ENCODE measurements at regions of chr10 and their contacts with region 1.

Region 1: GRCh38 chr10:124741281-124741921 is 2.8 kb downstream of the FAM53B start:
- DNase-seq: peak; percentile 88
- ATAC-seq: peak; percentile 67
- H3K4me3 Mint-ChIP-seq: peak overlapping the region; percentile 65
- H3K27ac Mint-ChIP-seq: peak overlapping the region; percentile 84
- H3K4me1 Mint-ChIP-seq: peaks cover 74% of the 10 kb centered on the region
- H3K27me3 Mint-ChIP-seq: peaks cover 7% of the 10 kb centered on the region

Region 2: DNA sequence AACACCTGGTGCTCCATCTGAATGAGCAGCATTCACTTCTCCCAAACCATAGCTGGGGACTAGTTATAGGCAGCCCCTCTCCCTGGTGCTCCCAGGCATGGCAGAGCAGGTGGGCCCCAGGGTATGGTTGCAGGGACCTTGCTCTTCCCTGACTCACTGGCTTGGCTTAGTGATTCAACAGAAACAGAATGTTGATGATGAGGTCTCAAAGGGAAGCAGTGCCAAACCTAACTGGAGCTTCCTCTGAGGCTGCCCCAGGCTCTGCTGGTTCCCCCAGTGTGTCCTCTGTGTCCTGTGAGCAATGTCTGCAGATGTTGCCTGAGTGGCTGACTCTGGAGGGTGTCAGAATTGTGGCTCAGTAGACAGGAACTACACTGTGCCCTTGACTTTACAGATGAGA is 1071.5 kb before region 1 on chr10:
- CTCF ChIA-PET with region 1: no interaction called
- POLR2A ChIA-PET with region 1: no interaction called
- intact Hi-C with region 1: no loop called
- DNase-seq: no peak
- ATAC-seq: no peak
- H3K4me3 Mint-ChIP-seq: no peak overlapping the region
- H3K27ac Mint-ChIP-seq: no peak overlapping the region
- H3K4me1 Mint-ChIP-seq: no peaks in the 10 kb centered on the region
- H3K27me3 Mint-ChIP-seq: peaks cover 15% of the 10 kb centered on the region

Region 3: DNA sequence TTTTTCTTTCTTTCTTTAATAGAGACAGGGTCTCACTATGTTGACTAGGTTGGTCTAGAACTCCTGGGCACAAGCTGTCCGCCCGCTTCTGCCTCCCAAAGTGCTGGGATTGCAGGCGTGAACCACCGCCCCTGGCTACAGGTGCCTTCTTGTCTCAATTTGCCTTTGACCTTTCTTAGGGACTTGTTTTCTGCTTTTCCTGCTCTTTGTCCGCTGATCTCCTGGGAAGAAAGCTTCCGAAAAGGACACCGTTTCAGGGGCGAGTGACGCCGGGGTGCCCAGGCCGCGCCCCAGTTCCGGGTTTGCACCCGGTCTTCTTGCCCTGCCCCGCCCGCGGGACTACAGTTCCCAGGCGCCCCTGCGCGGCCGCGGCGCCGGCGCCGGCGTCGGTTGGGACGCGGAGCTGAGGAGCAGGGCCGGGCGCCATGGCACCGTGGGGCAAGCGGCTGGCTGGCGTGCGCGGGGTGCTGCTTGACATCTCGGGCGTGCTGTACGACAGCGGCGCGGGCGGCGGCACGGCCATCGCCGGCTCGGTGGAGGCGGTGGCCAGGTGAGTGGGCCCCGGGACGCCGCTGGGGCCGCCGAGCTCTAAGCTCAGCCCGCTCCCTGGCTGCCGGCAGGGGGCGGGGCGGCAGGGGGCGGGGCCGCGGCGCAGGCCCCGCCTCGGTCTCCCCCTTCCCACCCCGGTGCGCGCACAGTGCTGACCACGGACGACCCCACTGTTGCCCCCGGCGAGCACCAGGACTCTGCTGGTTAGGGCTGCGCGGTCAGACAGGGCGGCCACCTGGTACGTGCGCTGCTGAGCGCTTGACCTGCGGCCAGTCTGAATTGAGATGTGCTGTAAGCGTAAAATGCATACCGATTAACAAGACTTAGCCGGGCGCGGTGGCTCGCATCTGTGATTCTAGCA is 279.7 kb before region 1 on chr10 and contains the start of gene LHPP:
- CTCF ChIA-PET with region 1: no interaction called
- POLR2A ChIA-PET with region 1: no interaction called
- intact Hi-C with region 1: loop called in 1 of 2 experiments (anchors 5 kb)
- DNase-seq: peak; percentile 92
- ATAC-seq: peak; percentile 97
- H3K4me3 Mint-ChIP-seq: peak within 1 kb of the TSS; percentile 71
- H3K27ac Mint-ChIP-seq: peak within 1 kb of the TSS; percentile 96
- H3K4me1 Mint-ChIP-seq: peaks cover 25% of the 10 kb centered on the region
- H3K27me3 Mint-ChIP-seq: peaks cover 2% of the 10 kb centered on the region
- total RNA-seq, gene LHPP: 11.5 to 14.0 TPM

Region 4: DNA sequence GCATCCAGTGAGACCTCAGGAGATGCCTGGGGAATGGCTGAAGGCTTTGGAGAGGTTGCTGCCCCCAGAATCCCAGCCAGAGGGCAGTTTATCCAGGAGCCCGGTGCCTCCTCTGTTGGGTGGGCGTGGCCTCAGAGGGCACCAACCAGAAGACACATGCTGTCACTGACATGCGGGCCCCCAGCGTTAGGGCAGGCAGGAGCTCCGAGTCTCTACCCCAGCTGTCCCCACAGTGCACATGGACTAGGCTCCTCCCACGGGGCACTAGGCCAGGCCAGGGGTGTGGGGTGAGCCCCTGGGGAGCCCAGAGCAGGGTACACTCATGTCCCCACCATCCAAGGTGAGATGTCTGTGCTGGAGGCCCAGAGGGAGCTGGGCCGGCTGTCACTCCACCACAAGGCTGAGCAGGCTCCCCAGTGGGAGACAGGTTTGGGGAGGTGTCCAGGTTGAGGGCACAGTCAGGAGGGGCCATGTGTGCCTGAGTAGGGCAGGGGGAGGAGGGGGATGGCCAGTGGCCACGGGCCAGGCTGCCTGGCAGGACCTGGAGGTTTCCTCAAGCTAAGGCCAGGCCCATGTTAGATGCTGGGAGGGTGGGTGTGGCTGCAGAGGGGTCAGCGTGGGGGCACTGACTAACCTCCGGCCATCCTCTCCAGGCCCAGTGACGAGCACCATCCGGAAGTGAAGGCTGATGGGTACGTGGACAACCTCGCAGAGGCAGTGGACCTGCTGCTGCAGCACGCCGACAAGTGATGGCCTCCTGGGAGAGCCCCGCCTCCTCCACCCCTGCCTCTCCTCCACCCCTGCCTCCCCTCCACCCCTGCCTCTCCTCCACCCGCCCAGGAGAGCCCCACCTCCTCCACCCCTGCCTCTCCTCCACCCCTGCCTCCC is 128.5 kb before region 1 on chr10:
- CTCF ChIA-PET with region 1: interaction called, 6 read pairs
- POLR2A ChIA-PET with region 1: no interaction called
- intact Hi-C with region 1: loop called (anchors 1 to 5 kb)
- DNase-seq: peak; percentile 43
- ATAC-seq: peak; percentile 30
- H3K4me3 Mint-ChIP-seq: no peak overlapping the region
- H3K27ac Mint-ChIP-seq: no peak overlapping the region
- H3K4me1 Mint-ChIP-seq: peaks cover 36% of the 10 kb centered on the region
- H3K27me3 Mint-ChIP-seq: no peaks in the 10 kb centered on the region

Region 5: GRCh38 chr10:124660404-124661125 is 80.8 kb before region 1 on chr10:
- CTCF ChIA-PET with region 1: interaction called, 12 read pairs
- POLR2A ChIA-PET with region 1: no interaction called
- intact Hi-C with region 1: no loop called
- DNase-seq: no peak
- ATAC-seq: no peak
- H3K4me3 Mint-ChIP-seq: no peak overlapping the region
- H3K27ac Mint-ChIP-seq: no peak overlapping the region
- H3K4me1 Mint-ChIP-seq: peaks cover 48% of the 10 kb centered on the region
- H3K27me3 Mint-ChIP-seq: no peaks in the 10 kb centered on the region

Region 6: GRCh38 chr10:124697830-124698544 is 43.4 kb before region 1 on chr10:
- CTCF ChIA-PET with region 1: interaction called, 13 read pairs
- POLR2A ChIA-PET with region 1: interaction called, 6 read pairs
- intact Hi-C with region 1: no loop called
- DNase-seq: peak; percentile 71
- ATAC-seq: peak; percentile 47
- H3K4me3 Mint-ChIP-seq: peak overlapping the region; percentile 56
- H3K27ac Mint-ChIP-seq: peak overlapping the region; percentile 90
- H3K4me1 Mint-ChIP-seq: peaks cover 93% of the 10 kb centered on the region
- H3K27me3 Mint-ChIP-seq: no peaks in the 10 kb centered on the region

Region 7: GRCh38 chr10:124719213-124719851 is 22.1 kb before region 1 on chr10:
- CTCF ChIA-PET with region 1: interaction called, 146 read pairs
- POLR2A ChIA-PET with region 1: interaction called, 24 read pairs
- intact Hi-C with region 1: loop called (anchors 1 kb)
- DNase-seq: peak; percentile 83
- ATAC-seq: peak; percentile 44
- H3K4me3 Mint-ChIP-seq: peak overlapping the region; percentile 68
- H3K27ac Mint-ChIP-seq: peak overlapping the region; percentile 95
- H3K4me1 Mint-ChIP-seq: peaks cover 95% of the 10 kb centered on the region
- H3K27me3 Mint-ChIP-seq: no peaks in the 10 kb centered on the region

Region 8: DNA sequence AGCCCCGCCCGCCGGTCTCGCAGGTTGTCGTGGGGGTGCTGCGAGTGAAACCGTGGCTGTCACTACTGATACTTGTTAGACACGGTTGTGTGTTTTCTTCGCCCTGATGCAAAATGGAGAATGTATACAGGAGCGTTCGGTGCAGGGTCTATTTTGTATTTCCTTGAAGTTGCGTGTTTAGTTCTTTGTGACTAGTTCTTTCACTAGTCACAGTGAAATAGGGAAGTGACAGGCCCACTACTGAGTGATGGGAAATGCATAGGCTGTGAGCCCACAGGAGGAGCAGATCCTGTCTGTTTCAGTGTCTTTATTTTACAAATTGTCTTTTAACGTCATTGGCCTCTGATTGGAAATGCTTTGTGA is 60.9 kb after region 1 on chr10:
- CTCF ChIA-PET with region 1: interaction called, 5 read pairs
- POLR2A ChIA-PET with region 1: interaction called, 3 read pairs
- intact Hi-C with region 1: loop called in 1 of 2 experiments (anchors 1 kb)
- DNase-seq: no peak
- ATAC-seq: peak; percentile 43
- H3K4me3 Mint-ChIP-seq: peak overlapping the region; percentile 91
- H3K27ac Mint-ChIP-seq: peak overlapping the region; percentile 90
- H3K4me1 Mint-ChIP-seq: peaks cover 19% of the 10 kb centered on the region
- H3K27me3 Mint-ChIP-seq: no peaks in the 10 kb centered on the region

Measured in activated CD4-positive, alpha-beta T cell treated with anti-CD3 and anti-CD28 coated beads for 36 hours (primary cell).